ENCODE measurements at regions of chr14 and their contacts with region 1.

Region 1: GRCh38 chr14:73295198-73295796 is 58.0 kb downstream of the PAPLN start:
- DNase-seq: no peak
- H3K4me3 Mint-ChIP-seq: no peak overlapping the region
- H3K27ac Mint-ChIP-seq: no peak overlapping the region
- H3K4me1 Mint-ChIP-seq: peaks cover 12% of the 10 kb centered on the region
- H3K27me3 Mint-ChIP-seq: no peaks in the 10 kb centered on the region

Region 2: GRCh38 chr14:72926292-72927028 is 368.8 kb before region 1 on chr14 and contains the start of gene DCAF4:
- CTCF ChIA-PET with region 1: no interaction called
- POLR2A ChIA-PET with region 1: no interaction called
- intact Hi-C with region 1: no loop called
- DNase-seq: peak; percentile 97
- H3K4me3 Mint-ChIP-seq: peak within 1 kb of the TSS; percentile 91
- H3K27ac Mint-ChIP-seq: peak within 1 kb of the TSS; percentile 69
- H3K4me1 Mint-ChIP-seq: peaks cover 18% of the 10 kb centered on the region
- H3K27me3 Mint-ChIP-seq: peaks cover 2% of the 10 kb centered on the region
- total RNA-seq, gene DCAF4: 13.4 to 13.6 TPM

Region 3: DNA sequence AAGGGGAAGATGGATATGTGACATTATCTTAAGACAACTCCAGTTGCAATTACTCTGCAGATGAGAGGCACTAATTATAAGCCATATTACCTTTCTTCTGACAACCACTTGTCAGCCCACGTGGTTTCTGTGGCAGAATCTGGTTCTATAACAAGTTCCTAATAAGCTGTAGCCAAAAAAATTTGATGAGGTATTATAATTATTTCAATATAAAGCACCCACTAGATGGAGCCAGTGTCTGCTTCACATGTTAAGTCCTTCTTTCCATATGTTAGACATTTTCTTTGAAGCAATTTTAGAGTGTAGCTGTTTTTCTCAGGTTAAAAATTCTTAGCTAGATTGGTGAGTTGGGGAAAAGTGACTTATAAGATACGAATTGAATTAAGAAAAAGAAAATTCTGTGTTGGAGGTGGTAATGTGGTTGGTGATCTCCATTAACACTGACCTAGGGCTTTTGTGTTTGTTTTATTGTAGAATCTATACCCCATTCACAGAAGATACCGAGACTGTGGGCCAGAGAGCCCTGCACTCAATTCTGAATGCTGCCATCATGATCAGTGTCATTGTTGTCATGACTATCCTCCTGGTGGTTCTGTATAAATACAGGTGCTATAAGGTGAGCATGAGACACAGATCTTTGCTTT is 122.1 kb before region 1 on chr14:
- CTCF ChIA-PET with region 1: interaction called, 5 read pairs
- POLR2A ChIA-PET with region 1: no interaction called
- intact Hi-C with region 1: loop called (anchors 10 kb)
- DNase-seq: no peak
- H3K4me3 Mint-ChIP-seq: no peak overlapping the region
- H3K27ac Mint-ChIP-seq: no peak overlapping the region
- H3K4me1 Mint-ChIP-seq: no peaks in the 10 kb centered on the region
- H3K27me3 Mint-ChIP-seq: no peaks in the 10 kb centered on the region

Region 4: DNA sequence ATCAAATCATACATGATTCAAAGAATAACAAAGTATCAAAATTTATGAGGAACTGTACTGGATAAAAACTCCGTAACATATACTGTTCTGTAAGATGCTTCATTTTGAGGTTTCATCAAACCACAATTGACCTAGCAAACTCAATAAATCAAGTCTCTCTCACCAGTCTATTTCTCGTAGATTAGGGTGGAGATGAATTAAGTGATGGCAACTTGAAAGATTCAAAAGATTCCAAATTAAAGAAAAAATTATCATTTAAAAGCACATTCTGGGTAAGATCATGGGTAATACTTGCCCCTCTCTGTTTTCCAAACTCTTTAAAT is 16.4 kb after region 1 on chr14:
- CTCF ChIA-PET with region 1: interaction called, 16 read pairs
- POLR2A ChIA-PET with region 1: no interaction called
- intact Hi-C with region 1: no loop called
- DNase-seq: no peak
- H3K4me3 Mint-ChIP-seq: no peak overlapping the region
- H3K27ac Mint-ChIP-seq: no peak overlapping the region
- H3K4me1 Mint-ChIP-seq: peaks cover 8% of the 10 kb centered on the region
- H3K27me3 Mint-ChIP-seq: no peaks in the 10 kb centered on the region

Region 5: DNA sequence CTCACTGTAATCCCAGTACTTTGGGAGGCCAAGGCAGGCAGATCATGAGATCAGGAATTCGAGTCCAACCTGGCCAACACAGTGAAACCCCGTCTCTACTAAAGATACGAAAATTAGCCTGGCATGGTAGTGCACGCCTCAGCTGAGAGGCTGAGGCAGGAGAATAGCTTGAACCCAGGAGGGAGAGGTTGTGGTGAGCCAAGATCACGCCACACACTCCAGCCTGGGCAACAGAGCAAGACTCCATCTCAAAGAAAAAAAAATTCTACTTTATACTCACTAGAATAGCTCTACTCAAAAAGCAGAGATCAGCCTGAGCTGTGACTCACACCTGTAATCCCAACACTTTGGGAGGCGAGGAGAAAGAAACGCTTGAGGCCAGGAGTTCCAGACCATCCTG is 146.0 kb after region 1 on chr14:
- CTCF ChIA-PET with region 1: interaction called, 10 read pairs
- POLR2A ChIA-PET with region 1: no interaction called
- intact Hi-C with region 1: no loop called
- DNase-seq: no peak
- H3K4me3 Mint-ChIP-seq: no peak overlapping the region
- H3K27ac Mint-ChIP-seq: no peak overlapping the region
- H3K4me1 Mint-ChIP-seq: peaks cover 6% of the 10 kb centered on the region
- H3K27me3 Mint-ChIP-seq: no peaks in the 10 kb centered on the region

Region 6: GRCh38 chr14:73463411-73463810 is 168.1 kb after region 1 on chr14:
- CTCF ChIA-PET with region 1: interaction called, 167 read pairs
- POLR2A ChIA-PET with region 1: interaction called, 5 read pairs
- intact Hi-C with region 1: loop called (anchors 2 kb)
- DNase-seq: peak; percentile 79
- H3K4me3 Mint-ChIP-seq: peak overlapping the region; percentile 65
- H3K27ac Mint-ChIP-seq: peak overlapping the region; percentile 89
- H3K4me1 Mint-ChIP-seq: peaks cover 66% of the 10 kb centered on the region
- H3K27me3 Mint-ChIP-seq: no peaks in the 10 kb centered on the region